ENCODE measurements at regions of chr10 and their contacts with region 1.

Region 1: DNA sequence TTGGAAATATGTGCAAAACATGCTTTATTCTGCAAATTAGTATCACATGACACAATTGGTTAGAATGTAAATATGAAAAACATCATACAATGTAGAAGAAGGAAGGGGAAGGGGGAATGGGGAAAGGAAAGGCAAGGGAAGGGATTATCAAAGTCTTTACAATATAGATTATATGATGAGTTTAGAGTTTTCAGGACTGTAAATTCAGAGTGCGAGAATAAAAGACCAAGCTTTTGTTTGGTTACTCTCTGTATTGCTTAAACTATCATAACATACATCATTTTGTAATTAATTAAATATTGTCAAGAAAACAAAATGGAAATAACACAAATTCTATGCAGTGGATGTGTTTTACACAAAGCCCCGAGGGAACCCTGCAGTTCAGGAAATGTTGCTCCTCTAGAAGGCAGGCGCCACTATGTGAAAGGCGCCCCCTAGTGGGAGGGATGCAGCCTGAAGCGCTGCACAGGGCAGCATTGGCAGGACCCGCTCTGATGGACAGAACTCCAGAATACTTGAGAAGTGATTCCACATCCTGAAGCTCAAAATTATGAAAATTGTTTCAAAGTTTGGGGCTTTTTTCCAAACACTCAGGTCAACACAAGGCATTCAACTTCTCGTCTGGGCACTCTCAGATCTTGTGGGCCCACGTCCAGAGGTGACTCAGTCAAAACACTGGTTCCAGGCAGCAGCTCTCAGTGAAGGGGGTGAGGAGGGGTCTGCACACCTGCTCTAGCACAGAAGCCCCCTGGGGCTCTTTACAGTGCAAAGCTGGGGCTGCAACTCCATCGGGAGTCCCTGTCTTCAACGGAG is 31.6 kb upstream of the TMEM254 start:
- DNase-seq: peak; percentile 91
- H3K4me3 Mint-ChIP-seq: no peak overlapping the region
- H3K27ac Mint-ChIP-seq: no peak overlapping the region
- H3K4me1 Mint-ChIP-seq: no peaks in the 10 kb centered on the region
- H3K27me3 Mint-ChIP-seq: peaks cover 28% of the 10 kb centered on the region
- CTCF ChIP-seq: peak; percentile 95

Region 2: DNA sequence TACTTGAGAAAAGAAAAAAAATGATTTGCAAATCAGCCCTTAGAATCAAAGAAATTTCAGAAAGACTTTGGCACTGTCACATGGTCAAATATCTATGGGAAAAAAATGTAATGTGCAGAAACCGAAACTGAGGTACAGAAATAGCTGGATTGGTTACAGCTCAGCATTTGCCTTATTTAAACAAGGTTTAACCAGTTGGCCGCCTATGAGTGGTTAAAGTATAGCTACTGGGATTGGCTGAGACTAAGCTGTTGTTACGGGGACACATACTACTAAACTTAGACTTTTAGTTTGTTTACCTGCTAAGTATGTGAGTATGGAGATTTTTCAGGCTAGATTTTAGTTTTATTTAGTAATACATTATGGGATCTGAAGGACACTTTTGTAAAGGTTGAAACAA is 136.5 kb before region 1 on chr10:
- CTCF ChIA-PET with region 1: interaction called, 3 read pairs
- intact Hi-C with region 1: loop called (anchors 5 kb)
- DNase-seq: no peak
- H3K4me3 Mint-ChIP-seq: no peak overlapping the region
- H3K27ac Mint-ChIP-seq: no peak overlapping the region
- H3K4me1 Mint-ChIP-seq: no peaks in the 10 kb centered on the region
- H3K27me3 Mint-ChIP-seq: peaks cover 68% of the 10 kb centered on the region
- CTCF ChIP-seq: no peak

Region 3: DNA sequence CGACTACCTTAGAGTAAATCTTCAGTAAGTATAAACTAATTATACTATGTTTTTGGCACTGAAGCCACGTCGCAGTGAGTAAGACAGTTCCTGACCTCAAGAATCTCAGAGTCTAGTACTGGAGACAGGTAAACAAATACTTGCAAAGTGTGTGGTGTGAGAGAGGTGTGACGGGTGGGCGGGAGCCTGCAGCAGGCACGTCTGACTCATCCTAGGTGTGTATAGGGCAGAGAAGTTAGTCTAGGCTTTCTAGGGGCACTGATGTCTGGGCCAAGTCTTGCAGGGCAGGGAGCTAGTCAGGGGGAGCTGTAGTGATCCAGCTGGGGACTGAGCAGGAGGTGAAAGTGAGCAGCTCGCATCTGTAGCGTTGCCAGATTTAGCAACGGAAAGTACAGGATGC is 62.0 kb before region 1 on chr10:
- CTCF ChIA-PET with region 1: no interaction called
- intact Hi-C with region 1: loop called (anchors 5 kb)
- DNase-seq: peak; percentile 65
- H3K4me3 Mint-ChIP-seq: no peak overlapping the region
- H3K27ac Mint-ChIP-seq: no peak overlapping the region
- H3K4me1 Mint-ChIP-seq: peaks cover 16% of the 10 kb centered on the region
- H3K27me3 Mint-ChIP-seq: peaks cover 65% of the 10 kb centered on the region
- CTCF ChIP-seq: no peak

Measured in Calu3 (cell line).